ENCODE measurements at regions of chr2 and their contacts with region 1.

Region 1: DNA sequence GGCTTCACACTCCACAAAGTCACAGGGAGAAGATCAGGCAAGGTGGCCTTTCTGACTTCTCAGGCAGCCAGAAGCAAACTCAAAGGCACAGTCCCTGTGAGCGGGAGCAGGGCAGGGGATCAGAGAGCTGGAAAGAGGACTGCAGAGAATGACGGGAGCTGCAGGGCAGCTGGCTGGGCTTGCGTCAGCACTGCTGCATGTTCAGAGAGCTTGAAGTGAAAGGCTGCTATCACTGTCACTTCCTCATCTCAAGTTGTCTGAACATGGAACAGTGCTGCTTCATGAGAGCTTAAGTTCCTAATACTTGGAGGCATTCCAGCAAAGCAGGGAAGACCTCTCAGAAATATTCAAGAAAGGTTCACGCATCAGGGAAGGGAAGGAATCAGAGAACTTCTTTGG is 20.4 kb downstream of the TGFBRAP1 start:
- DNase-seq: peak; percentile 49 to 77 (median 72)
- H3K4me3 ChIP-seq: no peak overlapping the region
- H3K27ac ChIP-seq: peak overlapping the region in 1 of 2 experiments; percentile 55
- H3K4me1 ChIP-seq: peaks cover 0 to 26% (median 24%) of the 10 kb centered on the region in 4 experiments
- H3K27me3 ChIP-seq: no peaks in the 10 kb centered on the region

Region 2: DNA sequence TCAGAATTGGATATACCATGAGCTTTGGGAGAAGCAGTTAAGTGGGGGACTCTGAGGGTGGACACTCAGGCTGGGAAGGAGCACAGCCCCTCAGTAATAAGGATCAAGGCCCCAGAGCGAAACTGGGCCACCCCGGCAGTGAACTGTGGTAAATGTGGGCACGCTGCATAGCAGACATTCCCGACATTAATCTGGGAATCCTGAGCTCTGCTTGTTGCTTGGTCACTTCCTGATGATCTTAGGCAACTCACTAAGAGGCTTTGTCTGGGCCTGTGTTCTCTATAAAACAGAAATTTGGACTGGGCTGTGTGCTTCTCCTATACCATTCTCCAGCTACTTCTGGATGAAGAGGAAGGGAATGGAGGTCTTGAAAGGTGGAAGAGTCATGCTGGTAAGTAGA is 15.6 kb after region 1 on chr2:
- CTCF ChIA-PET with region 1: interaction called, 17 read pairs
- POLR2A ChIA-PET with region 1: interaction called, 5 read pairs
- DNase-seq: no peak
- H3K4me3 ChIP-seq: peak overlapping the region in 4 of 7 experiments; percentile 5 to 57 (median 27)
- H3K27ac ChIP-seq: peak overlapping the region; percentile 94
- H3K4me1 ChIP-seq: peaks cover 32 to 90% (median 75%) of the 10 kb centered on the region in 4 experiments
- H3K27me3 ChIP-seq: no peaks in the 10 kb centered on the region

Region 3: DNA sequence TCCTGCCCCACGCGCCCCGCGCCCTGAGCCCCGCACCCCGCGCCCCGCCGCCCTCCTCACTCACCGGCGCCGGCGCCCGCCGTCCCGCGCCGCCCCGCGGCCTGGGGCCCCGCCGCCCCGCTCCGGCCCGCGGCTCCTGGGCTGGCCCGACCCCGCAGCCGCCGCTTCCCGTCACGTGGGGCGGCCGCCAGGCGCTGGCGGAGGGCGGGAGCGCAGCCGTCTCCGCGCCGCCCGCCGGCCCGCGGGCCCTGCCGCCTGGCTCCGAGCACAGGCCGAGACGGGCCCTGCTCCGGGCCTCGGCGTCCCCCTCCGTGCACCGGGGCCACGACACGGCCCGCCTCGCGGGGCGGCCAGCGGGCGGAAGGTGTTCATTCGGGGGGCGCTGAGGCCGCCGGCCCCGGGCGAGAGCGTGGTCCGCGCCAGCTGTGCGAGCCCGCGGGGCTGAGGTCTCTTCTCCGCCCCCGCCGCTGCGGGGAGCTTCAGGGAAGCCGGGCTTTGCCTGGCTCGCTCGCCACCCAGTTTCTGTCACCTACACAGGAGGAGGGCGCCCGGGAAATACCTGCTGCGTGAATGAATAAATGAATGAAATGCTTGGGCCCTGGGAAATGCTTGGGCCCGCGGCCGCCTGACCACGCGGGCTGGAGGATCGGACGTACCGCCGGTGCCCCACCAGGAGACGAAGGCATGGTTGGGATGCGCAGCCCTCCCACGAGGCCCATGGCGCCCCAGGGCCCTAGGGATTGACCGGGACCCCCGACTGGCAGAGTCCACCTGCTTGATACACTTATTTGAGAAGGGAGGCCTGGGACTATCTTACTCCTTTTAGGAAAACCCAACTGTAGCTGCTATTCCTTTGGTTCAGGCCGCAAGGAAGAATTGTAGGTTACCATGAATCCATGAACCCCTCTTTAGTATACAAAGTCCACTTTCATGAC is 20.7 kb after region 1 on chr2 and contains the start of gene TGFBRAP1:
- CTCF ChIA-PET with region 1: interaction called, 17 read pairs
- POLR2A ChIA-PET with region 1: interaction called, 4 read pairs
- DNase-seq: peak in 2 of 3 donors; percentile 68 to 76
- H3K4me3 ChIP-seq: peak within 1 kb of the TSS; percentile 40 to 85 (median 76)
- H3K27ac ChIP-seq: peak within 1 kb of the TSS; percentile 90 to 96
- H3K4me1 ChIP-seq: peaks cover 13 to 58% (median 55%) of the 10 kb centered on the region in 4 experiments
- H3K27me3 ChIP-seq: no peaks in the 10 kb centered on the region

Measured in common myeloid progenitor, CD34-positive (primary cell).